Aorta (tissue), 5 donors: ENCODE measurements at regions of chr11 and their contacts with region 1.

Region 1: GRCh38 chr11:95150946-95151684 is 61.5 kb downstream of the ENDOD1 start:
- DNase-seq: peak; percentile 94 to 95
- ATAC-seq: peak; percentile 95
- H3K4me3 ChIP-seq: peak overlapping the region; percentile 7 to 32
- H3K27ac ChIP-seq: peak overlapping the region in 1 of 2 donors; percentile 82
- H3K4me1 ChIP-seq: no peaks in the 10 kb centered on the region
- H3K27me3 ChIP-seq: no peaks in the 10 kb centered on the region

Region 2: DNA sequence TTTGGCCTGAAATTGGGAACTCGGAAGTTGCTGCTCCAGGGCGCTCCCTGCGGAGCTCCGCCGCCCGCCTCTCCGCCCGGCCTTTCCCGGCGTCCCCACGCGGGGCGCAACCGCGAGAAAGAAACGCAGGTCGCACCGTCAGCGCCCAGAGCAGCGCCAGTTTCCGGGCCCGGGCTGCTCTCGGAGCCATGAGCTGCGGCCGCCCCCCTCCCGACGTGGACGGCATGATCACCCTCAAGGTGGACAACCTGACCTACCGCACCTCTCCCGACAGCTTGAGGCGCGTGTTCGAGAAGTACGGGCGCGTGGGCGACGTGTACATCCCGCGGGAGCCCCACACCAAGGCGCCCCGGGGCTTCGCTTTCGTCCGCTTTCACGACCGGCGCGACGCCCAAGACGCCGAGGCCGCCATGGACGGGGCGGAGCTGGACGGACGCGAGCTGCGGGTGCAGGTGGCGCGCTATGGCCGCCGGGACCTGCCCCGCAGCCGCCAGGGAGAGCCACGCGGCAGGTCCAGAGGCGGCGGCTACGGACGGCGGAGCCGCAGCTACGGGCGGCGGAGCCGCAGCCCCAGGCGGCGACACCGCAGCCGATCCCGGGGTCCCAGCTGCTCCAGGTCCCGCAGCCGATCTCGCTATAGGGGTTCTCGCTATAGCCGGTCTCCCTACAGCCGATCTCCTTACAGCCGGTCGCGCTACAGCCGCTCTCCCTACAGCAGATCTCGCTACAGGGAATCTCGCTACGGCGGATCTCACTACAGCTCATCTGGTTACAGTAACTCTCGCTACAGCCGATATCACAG is 83.9 kb before region 1 on chr11:
- intact Hi-C with region 1: loop called (anchors 1 to 2 kb)
- DNase-seq: peak; percentile 91 to 96
- ATAC-seq: peak; percentile 90
- H3K4me3 ChIP-seq: peak overlapping the region; percentile 71 to 76
- H3K27ac ChIP-seq: peak overlapping the region; percentile 76 to 97
- H3K4me1 ChIP-seq: no peaks in the 10 kb centered on the region
- H3K27me3 ChIP-seq: no peaks in the 10 kb centered on the region

Region 3: GRCh38 chr11:95108159-95108611 is 42.9 kb before region 1 on chr11:
- intact Hi-C with region 1: loop called in 1 of 2 experiments (anchors 5 kb)
- DNase-seq: peak; percentile 71 to 79
- ATAC-seq: peak; percentile 74
- H3K4me3 ChIP-seq: no peak overlapping the region
- H3K27ac ChIP-seq: peak overlapping the region in 1 of 2 donors; percentile 42
- H3K4me1 ChIP-seq: peaks cover 1 to 8% of the 10 kb centered on the region in 2 donors
- H3K27me3 ChIP-seq: no peaks in the 10 kb centered on the region

Region 4: GRCh38 chr11:95337175-95337957 is 186.3 kb after region 1 on chr11:
- intact Hi-C with region 1: loop called in 1 of 2 experiments (anchors 10 kb)
- DNase-seq: peak; percentile 81 to 84
- ATAC-seq: peak; percentile 66
- H3K4me3 ChIP-seq: no peak overlapping the region
- H3K27ac ChIP-seq: peak overlapping the region; percentile 83 to 96
- H3K4me1 ChIP-seq: peaks cover 5 to 8% of the 10 kb centered on the region in 2 donors
- H3K27me3 ChIP-seq: no peaks in the 10 kb centered on the region

Region 5: DNA sequence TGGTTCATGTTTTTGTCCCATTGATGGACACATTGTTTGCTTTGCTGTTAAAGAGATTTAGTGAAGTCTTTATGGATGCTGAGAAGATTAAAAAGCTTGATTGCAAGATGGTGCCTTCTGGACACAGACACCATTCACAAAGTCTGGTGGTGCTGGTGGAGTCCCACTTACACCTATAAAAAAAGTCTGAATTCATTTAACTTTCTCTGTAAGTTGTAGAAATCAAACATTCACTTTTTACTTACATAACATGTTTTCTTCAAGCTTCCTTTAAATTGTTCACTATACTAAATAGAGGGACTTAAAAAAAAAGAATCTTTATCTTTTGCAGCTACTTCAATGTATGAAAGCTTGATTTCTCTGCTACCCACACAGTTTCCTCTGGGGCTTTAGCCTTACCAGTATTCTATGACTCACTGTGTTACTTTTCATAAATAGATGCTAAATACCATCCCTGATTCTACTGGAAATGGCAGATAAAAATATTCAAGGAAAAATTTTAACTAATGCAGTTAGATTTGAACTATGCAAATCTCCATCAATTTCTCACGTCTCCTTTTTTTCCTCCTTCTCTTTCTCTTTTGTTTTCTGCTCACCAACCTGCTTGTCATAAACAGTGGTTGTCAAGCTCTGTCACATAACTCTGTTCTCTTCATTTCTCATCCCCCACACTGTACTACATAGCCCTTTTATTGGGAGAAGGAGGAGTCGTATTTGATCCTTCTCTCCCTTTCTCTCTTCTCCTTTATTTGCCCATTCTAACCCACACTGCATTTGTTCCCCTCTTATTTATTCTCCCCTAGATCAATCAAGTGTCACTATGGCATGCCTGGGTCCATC is 548.7 kb after region 1 on chr11:
- intact Hi-C with region 1: loop called (anchors 1 to 5 kb)
- DNase-seq: no peak
- ATAC-seq: no peak
- H3K4me3 ChIP-seq: no peak overlapping the region
- H3K27ac ChIP-seq: no peak overlapping the region
- H3K4me1 ChIP-seq: no peaks in the 10 kb centered on the region
- H3K27me3 ChIP-seq: no peaks in the 10 kb centered on the region

Region 6: DNA sequence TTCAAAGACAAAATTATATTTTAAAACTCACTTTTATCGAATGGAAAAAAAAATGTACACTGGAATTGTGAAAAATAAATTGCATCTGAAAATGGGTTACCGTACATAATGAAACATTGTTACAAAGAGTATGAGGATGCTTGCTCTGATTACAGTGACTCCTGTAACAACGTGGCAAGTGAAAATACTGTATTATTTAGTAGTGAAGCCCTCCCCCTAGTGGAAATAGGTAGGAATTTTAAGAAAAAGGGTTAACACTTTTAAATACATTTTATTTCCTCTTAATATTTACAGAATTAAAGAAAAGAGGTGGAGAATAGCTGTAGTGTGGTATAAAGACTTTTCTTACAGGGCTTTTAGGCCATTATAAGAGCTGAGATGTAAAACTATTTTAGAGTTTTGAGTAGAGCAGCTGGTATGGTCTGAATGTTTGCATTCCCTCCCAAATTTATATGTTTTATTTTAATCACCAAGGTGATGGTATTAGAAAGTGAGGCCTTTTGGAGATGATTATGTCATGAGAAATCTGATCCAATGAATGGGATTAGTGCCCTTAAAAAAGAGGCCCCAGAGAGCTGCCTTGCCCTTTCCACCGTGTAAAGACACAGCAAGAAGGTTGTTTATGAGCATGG is 613.3 kb after region 1 on chr11:
- intact Hi-C with region 1: loop called (anchors 1 to 2 kb)
- DNase-seq: no peak
- ATAC-seq: no peak
- H3K4me3 ChIP-seq: no peak overlapping the region
- H3K27ac ChIP-seq: no peak overlapping the region
- H3K4me1 ChIP-seq: no peaks in the 10 kb centered on the region
- H3K27me3 ChIP-seq: no peaks in the 10 kb centered on the region